Caco-2 (cell line): ENCODE measurements at regions of chr3 and their contacts with region 1.

Region 1: DNA sequence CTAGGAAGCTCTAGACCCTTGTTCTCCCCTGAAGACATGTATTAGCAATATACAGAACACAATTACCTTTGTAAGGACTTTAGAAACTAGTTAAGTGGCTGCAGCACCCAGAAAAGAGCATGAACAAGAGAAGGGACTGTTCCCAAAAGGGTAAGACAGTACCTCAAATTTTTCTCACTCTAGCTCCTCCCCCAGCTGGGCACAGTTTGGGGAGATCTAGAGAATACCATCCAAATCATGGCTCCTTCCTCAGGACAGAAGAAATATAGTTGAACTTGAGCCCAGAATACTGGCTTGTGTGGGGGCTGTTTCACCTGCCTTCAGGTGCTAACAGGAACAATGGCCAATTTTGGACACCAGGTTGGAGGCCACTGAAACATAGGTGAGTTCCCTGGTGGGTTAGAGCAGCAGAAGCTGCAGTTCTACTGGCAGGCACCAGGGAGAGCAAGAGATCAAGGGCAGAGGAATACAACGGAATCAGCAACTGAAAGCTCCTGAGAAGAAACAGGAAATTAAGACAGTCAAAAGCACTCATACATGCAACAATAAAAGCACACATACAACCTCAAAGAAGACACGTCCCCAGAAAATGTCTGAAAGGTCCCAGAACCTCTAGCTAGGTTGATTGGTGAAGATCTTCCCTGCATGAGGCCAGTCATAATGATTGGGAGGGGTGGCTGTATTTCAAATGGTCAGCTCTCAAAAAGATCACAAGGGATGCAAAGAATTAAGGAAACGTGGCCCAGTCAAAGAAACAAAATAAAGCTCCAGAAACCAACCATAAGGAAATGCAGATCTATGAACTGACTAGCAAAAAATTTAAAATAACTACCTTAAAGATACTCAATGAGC is 104.9 kb upstream of the ASB14 start:
- DNase-seq: peak; percentile 76 to 78
- H3K4me3 ChIP-seq: no peak overlapping the region
- H3K4me3 Mint-ChIP-seq: no peak overlapping the region
- H3K27ac Mint-ChIP-seq: no peak overlapping the region
- H3K4me1 ChIP-seq: no peaks in the 10 kb centered on the region; the same call in 1 of the 2 replicates
- H3K4me1 Mint-ChIP-seq: no peaks in the 10 kb centered on the region
- H3K27me3 ChIP-seq: no peaks in the 10 kb centered on the region
- H3K27me3 Mint-ChIP-seq: no peaks in the 10 kb centered on the region
- CTCF ChIP-seq: peak; percentile 87 to 93

Region 2: DNA sequence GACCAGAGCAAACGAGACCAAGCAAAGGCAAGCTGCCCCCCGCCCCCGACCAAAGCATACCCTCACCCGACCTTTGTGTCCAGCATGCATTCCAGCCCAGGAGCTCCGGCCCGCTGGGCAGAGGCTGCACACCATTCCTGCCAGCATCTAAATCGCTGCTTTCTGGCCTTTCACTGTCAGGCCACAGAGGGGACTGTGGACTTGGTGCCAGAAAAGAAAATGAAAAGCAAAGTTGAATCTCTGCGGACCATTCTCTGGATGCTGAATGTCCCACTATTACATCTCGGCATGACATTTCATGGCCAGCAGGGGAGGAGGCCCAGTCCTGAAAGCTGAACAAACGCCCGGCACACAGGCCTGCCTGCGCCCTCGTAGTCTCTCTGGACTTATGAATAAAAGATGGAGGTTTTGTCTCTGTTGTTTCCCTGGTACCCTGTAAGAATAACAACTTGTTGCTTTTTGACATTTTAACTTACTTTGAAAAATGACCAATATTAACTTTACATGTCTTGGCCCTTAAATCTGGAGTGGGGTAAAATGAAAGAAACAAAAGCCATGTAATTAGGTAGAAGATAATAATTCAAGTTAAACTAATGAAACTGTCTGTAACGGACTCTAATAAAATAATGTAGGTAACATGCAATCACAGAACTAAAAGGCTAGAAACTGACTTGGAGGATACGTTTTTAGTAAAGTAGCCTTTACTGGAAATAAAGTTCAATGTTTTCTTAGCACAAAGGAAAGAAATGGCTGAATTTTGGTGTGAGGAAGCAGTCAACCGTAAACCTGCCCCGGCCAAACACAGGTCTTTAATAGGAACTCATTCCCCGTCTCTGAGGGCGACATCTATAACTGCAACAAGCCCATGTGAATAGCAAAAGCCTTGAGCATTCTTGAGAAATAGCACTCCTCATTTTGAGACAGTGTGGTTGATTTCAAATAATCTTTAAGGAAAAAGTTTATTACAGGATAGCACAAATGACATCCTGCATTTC is 245.0 kb before region 1 on chr3:
- CTCF ChIA-PET with region 1: no interaction called
- POLR2A ChIA-PET with region 1: no interaction called
- intact Hi-C with region 1: no loop called
- DNase-seq: no peak
- H3K4me3 ChIP-seq: no peak overlapping the region
- H3K4me3 Mint-ChIP-seq: no peak overlapping the region
- H3K27ac Mint-ChIP-seq: no peak overlapping the region
- H3K4me1 ChIP-seq: no peaks in the 10 kb centered on the region
- H3K4me1 Mint-ChIP-seq: no peaks in the 10 kb centered on the region
- H3K27me3 ChIP-seq: no peaks in the 10 kb centered on the region
- H3K27me3 Mint-ChIP-seq: no peaks in the 10 kb centered on the region
- CTCF ChIP-seq: no peak

Region 3: GRCh38 chr3:57434041-57434440 is 36.6 kb after region 1 on chr3:
- CTCF ChIA-PET with region 1: interaction called, 14 read pairs
- POLR2A ChIA-PET with region 1: no interaction called
- intact Hi-C with region 1: loop called (anchors 1 kb)
- DNase-seq: peak in 1 of 2 experiments; percentile 50
- H3K4me3 ChIP-seq: no peak overlapping the region
- H3K4me3 Mint-ChIP-seq: no peak overlapping the region
- H3K27ac Mint-ChIP-seq: no peak overlapping the region
- H3K4me1 ChIP-seq: peaks cover 39% of the 10 kb centered on the region
- H3K4me1 Mint-ChIP-seq: peaks cover 23% of the 10 kb centered on the region
- H3K27me3 ChIP-seq: no peaks in the 10 kb centered on the region
- H3K27me3 Mint-ChIP-seq: no peaks in the 10 kb centered on the region
- CTCF ChIP-seq: peak; percentile 39 to 68

Region 4: DNA sequence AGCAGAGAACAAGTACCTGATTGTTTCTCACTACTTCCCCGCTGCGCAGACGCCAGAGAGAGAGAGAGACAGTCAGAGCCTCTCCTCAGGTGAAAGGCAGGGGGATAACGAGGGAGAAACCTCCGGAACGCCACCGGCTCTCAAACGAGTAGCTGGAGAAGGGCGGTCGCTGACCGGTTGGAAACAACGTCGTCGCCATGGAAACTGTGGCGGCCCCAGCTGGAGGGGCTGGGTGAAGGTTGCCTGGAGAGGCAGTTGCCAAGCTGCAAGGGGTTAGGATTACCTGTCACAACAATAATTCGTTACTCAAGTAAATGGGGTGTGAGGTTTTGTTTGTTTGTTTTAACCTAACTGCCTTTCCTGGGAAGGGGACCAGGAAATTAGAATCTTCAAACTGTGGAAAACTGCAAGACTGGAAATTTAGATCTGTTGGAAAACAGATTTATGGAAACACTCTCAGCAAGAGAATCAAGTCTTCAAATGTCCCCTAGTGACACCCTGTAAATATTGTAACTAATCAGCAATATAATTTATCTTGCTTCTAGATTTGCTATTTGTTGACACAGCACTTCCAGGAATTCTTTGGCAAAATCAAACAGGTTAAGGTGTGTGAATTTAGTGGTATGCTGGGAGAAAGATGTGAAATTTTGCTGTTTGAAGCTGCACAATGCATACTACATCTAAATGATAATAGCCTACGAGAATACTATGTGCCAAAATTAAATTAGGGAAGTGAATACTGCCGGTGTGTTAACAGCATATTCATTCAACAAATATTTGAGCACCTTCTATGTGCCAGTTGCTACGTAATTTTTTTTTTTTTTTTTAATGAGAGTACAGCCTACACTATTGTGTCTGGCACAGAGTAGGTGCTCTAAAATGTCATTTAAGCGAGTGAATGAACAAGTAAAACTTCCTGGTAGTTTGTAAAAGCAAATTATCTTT is 147.1 kb after region 1 on chr3 and contains the start of gene DNAH12:
- CTCF ChIA-PET with region 1: no interaction called
- POLR2A ChIA-PET with region 1: no interaction called
- intact Hi-C with region 1: loop called (anchors 5 kb)
- DNase-seq: peak; percentile 77 to 81
- H3K4me3 ChIP-seq: no peak within 1 kb of the TSS
- H3K4me3 Mint-ChIP-seq: peak within 1 kb of the TSS; percentile 61
- H3K27ac Mint-ChIP-seq: peak within 1 kb of the TSS; percentile 63
- H3K4me1 ChIP-seq: peaks cover 9% of the 10 kb centered on the region; the same call in 1 of the 2 replicates
- H3K4me1 Mint-ChIP-seq: peaks cover 6% of the 10 kb centered on the region
- H3K27me3 ChIP-seq: no peaks in the 10 kb centered on the region
- H3K27me3 Mint-ChIP-seq: no peaks in the 10 kb centered on the region
- CTCF ChIP-seq: no peak
- total RNA-seq, gene DNAH12: 0.45 and 1.5 TPM in 2 replicates

Region 5: DNA sequence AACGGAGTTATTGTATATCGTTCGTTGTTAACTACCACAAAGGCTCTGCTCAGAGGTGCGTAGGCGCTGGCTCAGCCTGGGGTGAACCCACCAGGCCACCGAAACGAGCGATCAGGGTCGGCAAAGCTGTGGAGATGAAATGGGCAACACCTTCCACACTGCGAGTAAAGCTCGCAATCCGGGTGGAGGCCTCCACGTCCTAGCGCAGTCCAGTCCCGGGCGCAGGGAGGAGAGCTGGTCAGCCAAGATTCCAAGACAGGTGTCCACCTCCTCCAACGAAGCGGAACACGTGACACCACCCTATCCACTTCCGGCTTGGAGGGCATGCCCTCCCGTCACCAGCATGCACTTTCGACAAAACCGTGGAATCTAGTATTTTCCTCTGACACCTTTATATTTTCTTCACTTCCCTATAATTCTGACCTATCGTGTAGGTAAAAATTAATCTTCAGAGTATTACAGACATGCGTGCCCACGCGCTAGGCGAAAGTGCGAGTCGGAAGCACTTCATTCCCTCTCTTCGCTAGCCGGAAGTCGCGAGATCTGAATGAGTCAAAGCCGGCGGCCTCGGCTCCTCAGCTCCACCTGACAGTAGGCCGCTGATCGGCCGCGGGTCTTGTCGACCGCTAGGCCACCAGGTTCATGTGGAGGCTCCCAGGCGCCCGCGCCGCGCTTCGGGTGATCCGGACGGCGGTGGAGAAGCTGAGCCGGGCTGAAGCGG is 158.5 kb after region 1 on chr3 and contains the start of gene PDE12:
- CTCF ChIA-PET with region 1: interaction called, 16 read pairs
- POLR2A ChIA-PET with region 1: interaction called, 5 read pairs
- intact Hi-C with region 1: loop called (anchors 1 kb)
- DNase-seq: peak; percentile 92 to 94
- H3K4me3 ChIP-seq: peak within 1 kb of the TSS; percentile 71
- H3K4me3 Mint-ChIP-seq: peak within 1 kb of the TSS; percentile 66
- H3K27ac Mint-ChIP-seq: peak within 1 kb of the TSS; percentile 89
- H3K4me1 ChIP-seq: peaks cover 4% of the 10 kb centered on the region; the same call in 1 of the 2 replicates
- H3K4me1 Mint-ChIP-seq: no peaks in the 10 kb centered on the region
- H3K27me3 ChIP-seq: no peaks in the 10 kb centered on the region
- H3K27me3 Mint-ChIP-seq: no peaks in the 10 kb centered on the region
- CTCF ChIP-seq: no peak
- total RNA-seq, gene PDE12: 22.1 and 23.2 TPM in 2 replicates

Region 6: GRCh38 chr3:57572096-57572495 is 174.7 kb after region 1 on chr3:
- CTCF ChIA-PET with region 1: no interaction called
- POLR2A ChIA-PET with region 1: no interaction called
- intact Hi-C with region 1: no loop called
- DNase-seq: no peak
- H3K4me3 ChIP-seq: no peak overlapping the region
- H3K4me3 Mint-ChIP-seq: no peak overlapping the region
- H3K27ac Mint-ChIP-seq: no peak overlapping the region
- H3K4me1 ChIP-seq: peaks cover 6% of the 10 kb centered on the region
- H3K4me1 Mint-ChIP-seq: peaks cover 9% of the 10 kb centered on the region
- H3K27me3 ChIP-seq: no peaks in the 10 kb centered on the region
- H3K27me3 Mint-ChIP-seq: no peaks in the 10 kb centered on the region
- CTCF ChIP-seq: no peak

Region 7: GRCh38 chr3:57582474-57583168 is 185.2 kb after region 1 on chr3:
- CTCF ChIA-PET with region 1: no interaction called
- POLR2A ChIA-PET with region 1: no interaction called
- intact Hi-C with region 1: loop called (anchors 1 kb)
- DNase-seq: peak; percentile 70 to 75
- H3K4me3 ChIP-seq: no peak overlapping the region
- H3K4me3 Mint-ChIP-seq: no peak overlapping the region
- H3K27ac Mint-ChIP-seq: no peak overlapping the region
- H3K4me1 ChIP-seq: peaks cover 49% of the 10 kb centered on the region
- H3K4me1 Mint-ChIP-seq: peaks cover 6% of the 10 kb centered on the region
- H3K27me3 ChIP-seq: no peaks in the 10 kb centered on the region
- H3K27me3 Mint-ChIP-seq: no peaks in the 10 kb centered on the region
- CTCF ChIP-seq: peak in 1 of 2 experiments; percentile 11